BJ (cell line): ENCODE measurements at regions of chr1 and their contacts with region 1.

Region 1: DNA sequence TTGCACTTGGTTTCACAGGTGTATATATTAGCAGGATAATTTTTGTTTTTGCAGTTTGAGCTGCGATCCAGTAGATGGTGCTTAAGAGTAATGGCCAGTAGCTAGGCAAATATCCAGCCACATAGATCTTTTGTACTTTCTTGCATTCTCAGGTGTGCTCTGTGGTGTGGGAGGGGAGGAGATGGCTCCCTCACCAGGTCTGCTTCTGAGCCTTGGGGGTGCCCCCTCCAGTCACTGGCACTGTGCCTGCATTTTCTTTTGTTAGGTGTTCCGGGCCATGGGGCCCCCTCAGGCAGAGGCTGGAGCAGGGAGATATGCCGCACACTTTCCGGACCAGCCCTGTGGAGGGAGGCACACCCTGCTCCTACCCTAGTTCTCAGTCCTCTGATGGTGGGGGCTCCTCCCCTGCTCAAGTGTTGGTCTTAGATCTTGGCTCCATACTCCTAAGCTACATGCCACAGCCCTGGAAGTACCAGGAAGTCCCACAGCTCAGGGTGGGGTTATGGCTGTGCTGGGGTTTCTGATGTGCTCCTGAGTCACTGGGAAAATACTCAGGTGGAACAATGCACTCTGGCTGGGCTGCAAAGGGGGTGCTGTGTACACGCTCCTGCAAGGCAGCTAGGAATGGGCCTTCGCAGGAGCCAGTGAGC is 197.6 kb upstream of the DMRTA2 start:
- DNase-seq: no peak
- H3K4me3 ChIP-seq: no peak overlapping the region
- H3K27me3 ChIP-seq: no peaks in the 10 kb centered on the region
- CTCF ChIP-seq: peak; percentile 58

Region 2: GRCh38 chr1:50605186-50605875 is 15.5 kb before region 1 on chr1:
- CTCF ChIA-PET with region 1: interaction called, 25 read pairs
- POLR2A ChIA-PET with region 1: no interaction called
- DNase-seq: no peak
- H3K4me3 ChIP-seq: no peak overlapping the region
- H3K27me3 ChIP-seq: no peaks in the 10 kb centered on the region
- CTCF ChIP-seq: peak; percentile 58

Region 3: DNA sequence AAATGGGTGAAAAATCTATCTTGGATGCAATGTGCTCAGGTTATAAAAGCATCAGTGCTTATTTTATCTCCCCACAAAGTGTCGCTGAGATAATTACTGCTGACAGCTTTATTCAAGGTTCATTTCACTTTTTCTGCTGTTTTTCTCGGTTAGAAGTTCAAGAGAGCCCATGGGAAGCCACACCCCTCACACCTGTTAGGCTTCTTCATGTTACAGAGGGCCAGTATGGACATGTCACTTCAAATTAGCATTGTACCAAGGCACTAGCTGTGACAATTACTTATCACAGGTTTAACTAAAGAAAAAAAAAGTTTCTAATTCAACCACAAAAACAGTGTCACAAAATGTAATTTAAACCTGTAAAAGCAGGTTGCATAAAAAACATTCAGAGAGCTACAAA is 10.2 kb before region 1 on chr1:
- CTCF ChIA-PET with region 1: interaction called, 25 read pairs
- POLR2A ChIA-PET with region 1: no interaction called
- DNase-seq: no peak
- H3K4me3 ChIP-seq: no peak overlapping the region
- H3K27me3 ChIP-seq: no peaks in the 10 kb centered on the region
- CTCF ChIP-seq: no peak

Region 4: DNA sequence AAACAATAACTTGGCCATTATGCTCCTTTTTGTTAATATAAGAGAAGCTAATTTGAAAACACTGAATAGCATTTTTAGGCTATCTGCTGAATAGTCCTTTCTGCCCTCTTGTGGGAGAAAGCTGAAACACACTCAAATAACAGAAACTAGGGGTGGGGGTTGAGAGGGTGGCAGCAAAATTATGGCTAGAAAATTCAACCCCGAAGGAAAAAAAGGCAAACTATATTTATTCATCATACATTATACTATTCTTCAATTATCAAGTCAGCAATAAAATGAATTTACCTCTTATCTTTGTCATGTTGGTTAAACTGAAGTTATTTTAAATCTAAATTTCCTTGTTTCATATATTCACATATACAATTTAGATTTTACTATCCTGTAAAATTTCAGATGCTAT is 83.3 kb after region 1 on chr1:
- CTCF ChIA-PET with region 1: interaction called, 29 read pairs
- POLR2A ChIA-PET with region 1: no interaction called
- DNase-seq: no peak
- H3K4me3 ChIP-seq: no peak overlapping the region
- H3K27me3 ChIP-seq: no peaks in the 10 kb centered on the region
- CTCF ChIP-seq: peak; percentile 82